ENCODE measurements at regions of chr20 and their contacts with region 1.

Region 1: GRCh38 chr20:34643919-34644318 is 33.0 kb downstream of the PIGU start:
- DNase-seq: no peak
- H3K4me3 ChIP-seq: no peak overlapping the region
- H3K27ac ChIP-seq: no peak overlapping the region
- H3K4me1 ChIP-seq: no peaks in the 10 kb centered on the region
- CTCF ChIP-seq: no peak

Region 2: DNA sequence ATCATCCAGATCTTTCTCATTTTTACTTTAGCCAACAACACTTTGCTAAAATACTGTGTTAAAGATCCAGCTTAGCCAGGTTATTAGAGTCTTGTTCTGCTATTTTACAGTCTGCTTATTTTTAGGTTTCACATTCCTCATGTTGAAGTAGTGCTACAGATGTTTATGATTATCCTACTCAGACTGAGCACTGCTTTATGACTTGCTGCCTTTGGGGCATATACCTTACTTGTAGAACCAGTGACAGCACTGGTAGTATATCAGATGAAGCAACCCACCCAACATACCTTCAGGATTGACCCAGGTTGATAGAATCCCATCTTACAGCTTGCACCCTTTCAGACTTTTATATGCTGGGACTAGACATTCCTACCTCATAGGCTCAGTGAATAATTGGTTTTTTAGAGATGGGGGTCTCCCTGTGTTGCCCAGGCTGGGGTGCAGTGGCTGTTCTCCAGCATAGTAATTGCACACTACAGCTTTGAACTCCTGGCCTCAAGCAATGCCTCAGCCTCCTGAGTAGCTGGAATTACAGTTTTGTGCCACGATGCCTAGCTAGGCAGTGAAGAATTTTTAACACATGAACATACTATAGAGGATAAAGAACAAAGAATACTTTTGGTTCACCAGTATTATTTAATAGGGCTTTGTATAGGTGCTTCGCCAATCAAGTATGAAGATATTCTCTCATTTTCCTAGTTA is 191.5 kb before region 1 on chr20:
- CTCF ChIA-PET with region 1: no interaction called
- POLR2A ChIA-PET with region 1: no interaction called
- intact Hi-C with region 1: no loop called
- DNase-seq: no peak
- H3K4me3 ChIP-seq: no peak overlapping the region
- H3K27ac ChIP-seq: no peak overlapping the region
- H3K4me1 ChIP-seq: no peaks in the 10 kb centered on the region
- CTCF ChIP-seq: no peak

Region 3: GRCh38 chr20:34654207-34654744 is 10.4 kb after region 1 on chr20:
- CTCF ChIA-PET with region 1: no interaction called
- POLR2A ChIA-PET with region 1: interaction called, 11 read pairs
- intact Hi-C with region 1: no loop called
- DNase-seq: no peak
- H3K4me3 ChIP-seq: no peak overlapping the region
- H3K27ac ChIP-seq: no peak overlapping the region
- H3K4me1 ChIP-seq: no peaks in the 10 kb centered on the region
- CTCF ChIP-seq: no peak

Measured in OCI-LY7 (cell line).